ENCODE measurements at regions of chr1 and their contacts with region 1.

Region 1: GRCh38 chr1:32592943-32593342 is 53.7 kb downstream of the ZBTB8A start:
- DNase-seq: no peak
- ATAC-seq: no peak
- H3K4me3 ChIP-seq: no peak overlapping the region
- H3K27ac ChIP-seq: no peak overlapping the region
- H3K4me1 ChIP-seq: no peaks in the 10 kb centered on the region
- H3K27me3 ChIP-seq: no peaks in the 10 kb centered on the region
- CTCF ChIP-seq: no peak

Region 2: DNA sequence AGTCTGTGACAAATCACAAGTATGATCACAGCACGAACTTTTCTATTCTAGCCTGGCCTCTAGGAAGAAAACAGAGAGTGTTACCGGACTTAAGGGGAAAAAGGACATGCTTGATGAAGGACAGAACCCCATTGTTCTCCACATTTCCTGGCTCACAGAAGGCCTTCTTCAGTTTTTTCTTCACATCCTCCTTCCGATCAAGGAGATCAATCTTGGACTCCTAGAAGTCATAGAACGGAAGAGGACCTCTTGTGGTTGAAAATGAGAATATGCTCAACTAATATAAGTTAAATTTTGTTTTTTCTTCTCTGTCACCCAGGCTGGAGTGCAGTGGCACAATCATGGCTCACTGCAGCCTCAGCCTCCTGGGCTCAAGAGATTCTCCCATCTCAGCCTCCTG is 193.9 kb after region 1 on chr1:
- CTCF ChIA-PET with region 1: no interaction called
- POLR2A ChIA-PET with region 1: interaction called, 10 read pairs
- in situ Hi-C with region 1: no loop called
- intact Hi-C with region 1: no loop called
- DNase-seq: no peak
- ATAC-seq: no peak
- H3K4me3 ChIP-seq: no peak overlapping the region
- H3K27ac ChIP-seq: no peak overlapping the region
- H3K4me1 ChIP-seq: no peaks in the 10 kb centered on the region
- H3K27me3 ChIP-seq: no peaks in the 10 kb centered on the region
- CTCF ChIP-seq: no peak; the same call in 1 of the 2 replicates

Measured in Panc1 (cell line).